HepG2 (cell line): ENCODE measurements at regions of chr4 and their contacts with region 1.

Region 1: GRCh38 chr4:109803924-109804571 is 2.2 kb upstream of the CFI start:
- DNase-seq: peak; percentile 57
- ATAC-seq: peak; percentile 79
- H3K4me3 ChIP-seq: no peak overlapping the region
- H3K27ac ChIP-seq: no peak overlapping the region
- H3K4me1 ChIP-seq: peaks cover 55% of the 10 kb centered on the region
- H3K27me3 ChIP-seq: no peaks in the 10 kb centered on the region
- CTCF ChIP-seq: peak; percentile 80
- EP300 ChIP-seq: no peak
- POLR2A ChIP-seq: no peak
- RAD21 ChIP-seq: peak; percentile 45

Region 2: DNA sequence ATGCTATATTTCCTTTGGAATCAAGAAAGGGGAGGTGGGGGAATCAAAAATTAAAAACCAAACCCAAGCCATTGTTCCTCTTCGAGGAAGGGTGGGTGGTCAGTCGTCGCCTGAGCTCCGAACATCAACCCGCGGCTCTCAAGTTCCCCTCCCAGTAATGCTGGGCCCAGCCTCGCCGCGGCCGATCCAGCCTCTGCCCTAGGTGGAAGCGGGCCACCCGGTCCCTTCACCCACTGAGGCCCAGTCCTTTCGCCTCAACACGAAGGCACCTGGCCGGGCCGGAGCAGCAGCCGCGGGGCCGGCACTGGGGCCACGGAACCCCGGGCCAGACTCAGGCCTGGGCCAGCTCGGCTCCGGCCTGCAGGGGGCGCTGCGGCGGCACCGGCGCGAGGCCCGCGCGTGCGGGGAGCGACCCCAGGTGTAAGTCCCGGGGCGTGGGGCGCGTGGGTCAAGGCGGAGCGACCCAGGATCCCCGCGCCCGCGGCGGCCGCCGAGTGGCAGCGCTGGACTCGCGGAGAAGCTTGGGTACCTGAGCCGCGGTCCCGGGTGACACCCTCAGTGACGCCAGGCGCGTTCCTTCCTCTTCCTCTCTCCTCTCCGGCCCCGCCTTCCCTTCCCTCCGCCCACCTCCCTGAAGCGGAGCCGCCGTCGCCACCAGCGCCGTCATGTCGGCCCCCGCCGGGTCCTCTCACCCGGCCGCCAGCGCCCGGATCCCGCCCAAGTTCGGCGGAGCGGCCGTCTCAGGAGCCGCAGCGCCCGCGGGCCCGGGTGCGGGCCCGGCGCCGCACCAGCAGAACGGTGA is 370.6 kb before region 1 on chr4 and contains the start of gene SEC24B:
- CTCF ChIA-PET with region 1: no interaction called
- POLR2A ChIA-PET with region 1: interaction called, 4 read pairs
- in situ Hi-C with region 1: loop called (anchors 5 kb)
- intact Hi-C with region 1: loop called (anchors 5 kb)
- DNase-seq: peak; percentile 73
- ATAC-seq: peak; percentile 92
- H3K4me3 ChIP-seq: peak within 1 kb of the TSS; percentile 81 to 93 (median 86)
- H3K27ac ChIP-seq: peak within 1 kb of the TSS; percentile 81
- H3K4me1 ChIP-seq: peaks cover 43% of the 10 kb centered on the region
- H3K27me3 ChIP-seq: no peaks in the 10 kb centered on the region; a peak in 1 of 5 replicates
- CTCF ChIP-seq: peak; percentile 73
- EP300 ChIP-seq: no peak
- POLR2A ChIP-seq: peak; percentile 69 to 77
- RAD21 ChIP-seq: peak; percentile 86
- total RNA-seq, gene SEC24B: 14.6 and 22.9 TPM in 2 replicates

Region 3: GRCh38 chr4:109559983-109560686 is 243.9 kb before region 1 on chr4 and contains the start of gene MCUB:
- CTCF ChIA-PET with region 1: no interaction called
- POLR2A ChIA-PET with region 1: interaction called, 4 read pairs
- in situ Hi-C with region 1: loop called (anchors 25 kb)
- intact Hi-C with region 1: loop called (anchors 10 kb)
- DNase-seq: peak; percentile 69
- ATAC-seq: peak; percentile 97
- H3K4me3 ChIP-seq: peak within 1 kb of the TSS; percentile 67 to 79 (median 69)
- H3K27ac ChIP-seq: peak within 1 kb of the TSS; percentile 17
- H3K4me1 ChIP-seq: peaks cover 12% of the 10 kb centered on the region
- H3K27me3 ChIP-seq: no peaks in the 10 kb centered on the region
- CTCF ChIP-seq: no peak
- EP300 ChIP-seq: no peak
- POLR2A ChIP-seq: no peak
- RAD21 ChIP-seq: no peak
- total RNA-seq, gene MCUB: 0.95 and 1.4 TPM in 2 replicates

Region 4: DNA sequence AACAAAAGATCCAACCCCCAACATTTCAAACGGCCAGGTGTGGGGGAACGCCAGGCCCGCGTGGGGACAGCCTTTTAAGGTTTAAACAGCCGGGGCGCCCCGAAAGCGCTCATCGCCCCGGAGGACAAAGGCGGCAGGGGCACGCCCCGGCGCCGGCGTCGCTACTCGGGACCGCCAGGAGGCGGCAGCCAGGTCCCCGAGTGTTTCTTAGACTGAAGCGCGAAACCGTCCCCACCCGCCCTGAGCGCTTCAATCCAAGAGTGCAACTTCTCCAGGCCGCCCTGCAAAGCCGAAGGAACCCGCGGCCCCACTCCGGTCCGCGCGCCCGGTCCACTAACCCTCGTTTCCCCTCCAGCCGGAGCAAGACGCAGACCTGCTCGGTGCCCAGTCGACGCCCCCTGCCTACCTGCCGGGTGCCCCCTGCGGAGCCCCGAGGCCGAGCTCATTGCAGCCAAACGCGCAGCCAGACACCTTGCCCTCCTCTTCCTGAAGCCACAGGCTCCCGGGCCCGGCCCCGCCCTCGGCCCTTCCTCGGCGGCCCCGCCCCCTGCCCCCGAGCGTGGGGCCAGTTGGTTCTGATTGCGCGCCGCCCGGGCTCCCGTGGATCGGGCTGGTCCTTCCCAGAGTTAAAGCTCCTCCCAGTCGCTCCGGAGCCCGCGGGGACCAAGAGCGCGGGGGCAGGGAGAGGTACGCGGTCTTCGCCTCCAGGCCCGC is 100.9 kb before region 1 on chr4 and contains the start of gene CASP6:
- CTCF ChIA-PET with region 1: no interaction called
- POLR2A ChIA-PET with region 1: no interaction called
- in situ Hi-C with region 1: no loop called
- intact Hi-C with region 1: loop called (anchors 1 kb)
- DNase-seq: peak; percentile 36
- ATAC-seq: peak; percentile 83
- H3K4me3 ChIP-seq: peak within 1 kb of the TSS; percentile 69 to 76 (median 69)
- H3K27ac ChIP-seq: peak within 1 kb of the TSS; percentile 68
- H3K4me1 ChIP-seq: peaks cover 37% of the 10 kb centered on the region
- H3K27me3 ChIP-seq: no peaks in the 10 kb centered on the region
- CTCF ChIP-seq: peak; percentile 49
- EP300 ChIP-seq: no peak
- POLR2A ChIP-seq: peak; percentile 29 to 64; a peak in 3 of 4 replicates
- RAD21 ChIP-seq: 0 out of 2 replicates have a peak, but pooled peaks have one; percentile 28
- total RNA-seq, gene CASP6: 34.6 and 42.4 TPM in 2 replicates

Region 5: DNA sequence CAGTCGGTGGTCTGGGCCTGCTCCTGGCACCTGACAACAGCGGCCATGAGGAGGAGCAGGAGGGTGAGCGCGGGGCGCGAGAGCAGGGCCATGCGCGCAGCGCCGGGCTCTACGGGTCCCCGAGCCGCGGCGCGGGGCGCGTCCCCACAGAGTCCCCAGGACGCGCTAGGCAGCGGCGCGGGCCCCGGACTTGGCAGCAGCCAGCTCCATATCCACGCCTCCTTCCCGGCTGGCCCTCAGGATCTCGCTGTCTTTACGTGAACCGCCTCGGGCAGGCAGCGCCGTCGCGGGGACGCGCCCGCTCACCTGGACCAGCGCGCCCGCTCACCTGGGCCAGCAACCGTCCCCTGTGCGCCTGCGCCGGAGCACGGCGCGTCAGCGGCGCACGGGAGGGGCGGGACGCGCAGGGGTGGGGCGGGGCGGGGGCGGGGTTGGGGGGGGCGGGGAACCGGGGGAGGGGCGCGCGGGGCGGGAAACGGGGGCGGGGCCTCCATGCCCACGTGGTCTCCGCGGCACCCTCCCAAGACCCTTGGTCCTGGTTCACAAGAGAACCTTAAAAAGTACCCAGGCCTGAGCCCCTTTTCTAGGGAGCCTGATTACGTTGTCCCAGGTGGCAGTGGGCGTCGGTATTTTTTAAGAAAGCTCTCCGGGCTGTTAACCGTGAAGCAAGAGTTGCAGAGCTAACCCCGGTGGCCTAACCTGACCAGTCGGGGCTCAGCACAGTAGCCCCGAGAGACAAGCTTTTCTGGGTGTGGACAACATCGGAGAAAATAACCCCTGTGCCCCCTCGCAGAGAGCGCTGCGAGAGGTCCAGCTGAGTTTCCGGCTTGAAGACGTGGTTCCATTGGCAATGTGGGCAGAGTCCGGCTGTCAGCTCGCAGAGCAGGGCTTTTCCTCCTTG is 74.1 kb before region 1 on chr4 and contains the start of gene PLA2G12A:
- CTCF ChIA-PET with region 1: no interaction called
- POLR2A ChIA-PET with region 1: interaction called, 6 read pairs
- in situ Hi-C with region 1: no loop called
- intact Hi-C with region 1: loop called (anchors 2 kb)
- DNase-seq: peak; percentile 68
- ATAC-seq: peak; percentile 96
- H3K4me3 ChIP-seq: peak within 1 kb of the TSS; percentile 79 to 91 (median 88)
- H3K27ac ChIP-seq: peak within 1 kb of the TSS; percentile 81
- H3K4me1 ChIP-seq: peaks cover 25% of the 10 kb centered on the region
- H3K27me3 ChIP-seq: no peaks in the 10 kb centered on the region; a peak in 2 of 5 replicates
- CTCF ChIP-seq: no peak
- EP300 ChIP-seq: no peak
- POLR2A ChIP-seq: peak; percentile 45 to 79; a peak in 2 of 4 replicates
- RAD21 ChIP-seq: peak; percentile 46; the same call in 1 of the 2 replicates
- total RNA-seq, gene PLA2G12A: 38.7 and 61.2 TPM in 2 replicates

Region 6: GRCh38 chr4:109764376-109764775 is 39.7 kb before region 1 on chr4:
- CTCF ChIA-PET with region 1: no interaction called
- POLR2A ChIA-PET with region 1: no interaction called
- in situ Hi-C with region 1: no loop called
- intact Hi-C with region 1: loop called (anchors 5 kb)
- DNase-seq: no peak
- ATAC-seq: no peak
- H3K4me3 ChIP-seq: no peak overlapping the region
- H3K27ac ChIP-seq: no peak overlapping the region
- H3K4me1 ChIP-seq: no peaks in the 10 kb centered on the region
- H3K27me3 ChIP-seq: no peaks in the 10 kb centered on the region
- CTCF ChIP-seq: no peak
- EP300 ChIP-seq: no peak
- POLR2A ChIP-seq: no peak
- RAD21 ChIP-seq: no peak

Region 7: GRCh38 chr4:110132816-110133719 is 329.0 kb after region 1 on chr4:
- CTCF ChIA-PET with region 1: no interaction called
- POLR2A ChIA-PET with region 1: no interaction called
- in situ Hi-C with region 1: no loop called
- intact Hi-C with region 1: no loop called
- DNase-seq: peak; percentile 44
- ATAC-seq: peak; percentile 70
- H3K4me3 ChIP-seq: no peak overlapping the region
- H3K27ac ChIP-seq: no peak overlapping the region
- H3K4me1 ChIP-seq: peaks cover 27% of the 10 kb centered on the region
- H3K27me3 ChIP-seq: no peaks in the 10 kb centered on the region
- CTCF ChIP-seq: no peak
- EP300 ChIP-seq: peak in 1 of 2 experiments; percentile 6; a peak in 1 of 4 replicates
- POLR2A ChIP-seq: no peak
- RAD21 ChIP-seq: no peak